SK-N-SH (cell line): ENCODE measurements at regions of chr19 and their contacts with region 1.

Region 1: GRCh38 chr19:16185123-16185767 is at the start of gene FAM32A:
- DNase-seq: peak; percentile 96
- H3K4me3 ChIP-seq: peak within 1 kb of the TSS; percentile 73 to 99
- H3K27ac ChIP-seq: peak within 1 kb of the TSS; percentile 77 to 80
- H3K4me1 ChIP-seq: peaks cover 3 to 7% of the 10 kb centered on the region in 2 experiments; a peak in 2 of 4 replicates
- H3K27me3 ChIP-seq: no peaks in the 10 kb centered on the region
- CTCF ChIP-seq: no peak; the same call in 1 of the 2 replicates
- EP300 ChIP-seq: no peak
- RAD21 ChIP-seq: no peak
- polyA plus RNA-seq, gene FAM32A: 156 and 192 TPM in 2 replicates

Region 2: GRCh38 chr19:16076154-16076957 is 108.9 kb before region 1 on chr19 and contains the start of gene TPM4:
- CTCF ChIA-PET with region 1: interaction called, 6 read pairs
- POLR2A ChIA-PET with region 1: interaction called, 10 read pairs
- DNase-seq: peak; percentile 86
- H3K4me3 ChIP-seq: peak within 1 kb of the TSS; percentile 74 to 78
- H3K27ac ChIP-seq: peak within 1 kb of the TSS; percentile 99
- H3K4me1 ChIP-seq: peaks cover 12 to 14% of the 10 kb centered on the region in 2 experiments
- H3K27me3 ChIP-seq: no peaks in the 10 kb centered on the region
- CTCF ChIP-seq: no peak
- EP300 ChIP-seq: no peak
- RAD21 ChIP-seq: no peak
- polyA plus RNA-seq, gene TPM4: 415 and 440 TPM in 2 replicates

Region 3: GRCh38 chr19:16170134-16170533 is 15.1 kb before region 1 on chr19:
- CTCF ChIA-PET with region 1: interaction called, 14 read pairs
- POLR2A ChIA-PET with region 1: no interaction called
- DNase-seq: no peak
- H3K4me3 ChIP-seq: no peak overlapping the region
- H3K27ac ChIP-seq: no peak overlapping the region
- H3K4me1 ChIP-seq: no peaks in the 10 kb centered on the region
- H3K27me3 ChIP-seq: no peaks in the 10 kb centered on the region; the same call in 1 of the 2 replicates
- CTCF ChIP-seq: no peak
- EP300 ChIP-seq: no peak
- RAD21 ChIP-seq: no peak

Region 4: GRCh38 chr19:16197622-16198369 is 12.6 kb after region 1 on chr19 and contains the start of gene AP1M1:
- CTCF ChIA-PET with region 1: interaction called, 9 read pairs
- POLR2A ChIA-PET with region 1: interaction called, 18 read pairs
- DNase-seq: peak; percentile 98
- H3K4me3 ChIP-seq: peak within 1 kb of the TSS; percentile 94 to 99
- H3K27ac ChIP-seq: peak within 1 kb of the TSS; percentile 88 to 90
- H3K4me1 ChIP-seq: peaks cover 13 to 17% of the 10 kb centered on the region in 2 experiments; a peak in 3 of 4 replicates
- H3K27me3 ChIP-seq: no peaks in the 10 kb centered on the region
- CTCF ChIP-seq: no peak
- EP300 ChIP-seq: no peak; a peak in 1 of 4 replicates
- RAD21 ChIP-seq: no peak
- polyA plus RNA-seq, gene AP1M1: 101 and 133 TPM in 2 replicates